ENCODE measurements at regions of chr12 and their contacts with region 1.

Region 1: GRCh38 chr12:100154474-100155247 is 12.0 kb upstream of the BLTP3B start:
- DNase-seq: peak; percentile 28 to 78 (median 51)
- ATAC-seq: peak; percentile 77
- H3K4me3 ChIP-seq: no peak overlapping the region
- H3K4me3 Mint-ChIP-seq: no peak overlapping the region
- H3K27ac ChIP-seq: no peak overlapping the region
- H3K27ac Mint-ChIP-seq: peak overlapping the region in 1 of 9 donors; percentile 64
- H3K4me1 ChIP-seq: no peaks in the 10 kb centered on the region
- H3K4me1 Mint-ChIP-seq: peaks cover 0 to 11% (median 5%) of the 10 kb centered on the region in 7 donors
- H3K27me3 ChIP-seq: no peaks in the 10 kb centered on the region
- H3K27me3 Mint-ChIP-seq: no peaks in the 10 kb centered on the region

Region 2: DNA sequence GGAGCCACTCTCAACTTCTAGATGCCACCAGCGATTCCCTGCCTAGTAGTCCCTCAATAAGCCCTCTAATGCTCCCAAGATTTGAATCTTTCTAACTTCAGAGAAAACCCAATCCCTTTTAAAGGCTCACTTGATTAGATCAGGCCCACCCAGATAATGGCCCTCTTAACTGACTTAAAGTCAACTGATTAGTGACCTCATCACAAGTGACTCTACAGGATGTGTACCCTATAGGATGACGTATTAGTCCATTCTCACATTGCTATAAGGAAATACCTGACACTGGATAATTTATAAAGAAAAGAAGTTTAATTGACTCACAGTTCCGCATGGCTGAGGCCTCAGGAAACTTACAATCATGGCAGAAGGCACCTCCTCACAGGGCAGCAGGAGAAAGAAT is 219.1 kb before region 1 on chr12:
- CTCF ChIA-PET with region 1: no interaction called
- POLR2A ChIA-PET with region 1: no interaction called
- intact Hi-C with region 1: no loop called
- DNase-seq: no peak
- ATAC-seq: no peak
- H3K4me3 ChIP-seq: no peak overlapping the region
- H3K4me3 Mint-ChIP-seq: no peak overlapping the region
- H3K27ac ChIP-seq: no peak overlapping the region
- H3K27ac Mint-ChIP-seq: no peak overlapping the region
- H3K4me1 ChIP-seq: no peaks in the 10 kb centered on the region
- H3K4me1 Mint-ChIP-seq: no peaks in the 10 kb centered on the region
- H3K27me3 ChIP-seq: no peaks in the 10 kb centered on the region
- H3K27me3 Mint-ChIP-seq: peaks cover 0 to 13% (median 0%) of the 10 kb centered on the region in 5 donors

Region 3: DNA sequence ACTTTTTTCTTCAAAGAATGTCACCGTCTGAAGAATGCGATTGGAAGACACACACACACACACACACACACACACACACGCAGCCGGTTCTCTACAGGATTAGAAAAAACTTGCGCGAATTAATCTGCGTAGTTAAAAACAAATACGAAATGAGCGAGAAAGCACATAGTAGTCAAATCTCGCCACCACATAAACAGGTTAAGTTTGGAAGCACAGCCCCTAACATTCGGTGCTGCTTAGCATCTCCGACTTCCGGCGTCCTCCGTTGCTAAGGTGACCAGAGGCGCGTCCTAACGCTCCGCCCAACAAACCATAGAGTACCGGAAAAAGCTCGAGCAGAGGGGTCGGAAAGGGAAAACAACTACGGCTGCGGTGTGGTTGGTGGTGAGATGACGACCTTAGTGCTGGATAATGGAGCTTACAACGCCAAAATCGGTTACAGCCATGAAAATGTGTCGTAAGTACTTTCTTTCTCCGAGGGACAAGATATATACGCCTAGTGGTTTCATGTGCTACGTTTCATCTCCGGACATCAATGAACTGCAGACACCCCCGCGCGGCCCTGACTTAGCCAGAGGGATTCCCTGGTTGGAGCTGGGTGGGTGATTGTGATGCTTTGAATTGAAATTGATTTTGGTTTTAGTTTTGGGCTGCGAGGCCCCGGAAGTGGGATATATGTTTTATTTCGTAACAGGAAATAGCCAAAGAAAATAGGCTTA is 46.0 kb after region 1 on chr12 and contains the start of gene ACTR6:
- CTCF ChIA-PET with region 1: interaction called, 3 read pairs
- POLR2A ChIA-PET with region 1: interaction called, 3 read pairs
- intact Hi-C with region 1: loop called (anchors 1 kb)
- DNase-seq: peak; percentile 91 to 99 (median 97)
- ATAC-seq: peak; percentile 93
- H3K4me3 ChIP-seq: peak within 1 kb of the TSS; percentile 84
- H3K4me3 Mint-ChIP-seq: peak within 1 kb of the TSS; percentile 95 to 99 (median 98)
- H3K27ac ChIP-seq: peak within 1 kb of the TSS; percentile 95
- H3K27ac Mint-ChIP-seq: peak within 1 kb of the TSS; percentile 98 to 100 (median 99)
- H3K4me1 ChIP-seq: peaks cover 10 to 27% of the 10 kb centered on the region in 2 donors
- H3K4me1 Mint-ChIP-seq: peaks cover 17 to 56% (median 44%) of the 10 kb centered on the region in 7 donors
- H3K27me3 ChIP-seq: no peaks in the 10 kb centered on the region
- H3K27me3 Mint-ChIP-seq: no peaks in the 10 kb centered on the region
- total RNA-seq, gene ACTR6: 24.1 to 46.8 (median 34.6) TPM

Region 4: GRCh38 chr12:100404769-100405407 is 250.2 kb after region 1 on chr12:
- CTCF ChIA-PET with region 1: no interaction called
- POLR2A ChIA-PET with region 1: no interaction called
- intact Hi-C with region 1: loop called in 1 of 2 experiments (anchors 10 kb)
- DNase-seq: peak in 2 of 9 donors; percentile 2 to 25
- ATAC-seq: no peak
- H3K4me3 ChIP-seq: no peak overlapping the region
- H3K4me3 Mint-ChIP-seq: no peak overlapping the region
- H3K27ac ChIP-seq: no peak overlapping the region
- H3K27ac Mint-ChIP-seq: no peak overlapping the region
- H3K4me1 ChIP-seq: no peaks in the 10 kb centered on the region
- H3K4me1 Mint-ChIP-seq: no peaks in the 10 kb centered on the region
- H3K27me3 ChIP-seq: no peaks in the 10 kb centered on the region
- H3K27me3 Mint-ChIP-seq: peaks cover 0 to 17% (median 11%) of the 10 kb centered on the region in 5 donors

Region 5: GRCh38 chr12:100554608-100555077 is 400.0 kb after region 1 on chr12:
- CTCF ChIA-PET with region 1: no interaction called
- POLR2A ChIA-PET with region 1: no interaction called
- intact Hi-C with region 1: loop called in 1 of 2 experiments (anchors 2 kb)
- DNase-seq: peak in 2 of 9 donors; percentile 4 to 13
- ATAC-seq: no peak
- H3K4me3 ChIP-seq: no peak overlapping the region
- H3K4me3 Mint-ChIP-seq: no peak overlapping the region
- H3K27ac ChIP-seq: no peak overlapping the region
- H3K27ac Mint-ChIP-seq: peak overlapping the region in 1 of 9 donors; percentile 25
- H3K4me1 ChIP-seq: no peaks in the 10 kb centered on the region
- H3K4me1 Mint-ChIP-seq: no peaks in the 10 kb centered on the region
- H3K27me3 ChIP-seq: no peaks in the 10 kb centered on the region
- H3K27me3 Mint-ChIP-seq: peaks cover 0 to 16% (median 7%) of the 10 kb centered on the region in 5 donors

Measured in naive thymus-derived CD4-positive, alpha-beta T cell (primary cell).